IMR-90 (cell line): ENCODE measurements at regions of chr9 and their contacts with region 1.

Region 1: DNA sequence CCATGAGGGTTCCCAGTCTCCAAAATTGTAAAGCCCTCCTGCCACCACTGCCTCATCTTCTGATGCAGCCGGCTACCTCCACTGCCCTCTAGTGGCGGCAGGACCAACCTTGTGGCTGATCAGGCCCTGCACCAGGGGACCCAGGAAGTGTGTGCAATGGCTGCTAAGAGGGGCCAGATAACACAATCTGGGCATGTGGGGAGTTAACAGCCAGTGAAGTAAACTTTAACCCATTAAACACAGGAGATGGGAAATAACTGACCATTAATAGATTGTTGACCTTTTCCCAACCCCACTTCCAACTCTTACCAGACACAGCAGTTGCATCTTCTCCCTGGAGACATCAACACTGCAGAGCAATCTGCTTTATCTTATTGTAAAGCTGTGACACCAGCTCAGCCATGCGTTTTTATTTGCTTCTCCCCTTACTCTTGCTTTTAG is 63.3 kb downstream of the FREM1 start:
- DNase-seq: peak; percentile 17
- ATAC-seq: peak; percentile 63; the same call in 1 of the 2 replicates
- H3K4me3 ChIP-seq: no peak overlapping the region
- H3K27ac ChIP-seq: no peak overlapping the region
- H3K4me1 ChIP-seq: no peaks in the 10 kb centered on the region
- H3K27me3 ChIP-seq: no peaks in the 10 kb centered on the region; the same call in 1 of the 2 replicates
- CTCF ChIP-seq: peak; percentile 46
- POLR2A ChIP-seq: no peak
- RAD21 ChIP-seq: peak; percentile 11; the same call in 1 of the 2 replicates

Region 2: GRCh38 chr9:13750061-13750460 is 1096.8 kb before region 1 on chr9:
- CTCF ChIA-PET with region 1: no interaction called
- POLR2A ChIA-PET with region 1: no interaction called
- dilution Hi-C with region 1: no loop called
- in situ Hi-C with region 1: no loop called
- intact Hi-C with region 1: loop called (anchors 10 kb)
- DNase-seq: peak; percentile 94
- ATAC-seq: peak; percentile 83
- H3K4me3 ChIP-seq: no peak overlapping the region
- H3K27ac ChIP-seq: no peak overlapping the region
- H3K4me1 ChIP-seq: no peaks in the 10 kb centered on the region
- H3K27me3 ChIP-seq: no peaks in the 10 kb centered on the region
- CTCF ChIP-seq: no peak
- POLR2A ChIP-seq: no peak
- RAD21 ChIP-seq: no peak

Region 3: DNA sequence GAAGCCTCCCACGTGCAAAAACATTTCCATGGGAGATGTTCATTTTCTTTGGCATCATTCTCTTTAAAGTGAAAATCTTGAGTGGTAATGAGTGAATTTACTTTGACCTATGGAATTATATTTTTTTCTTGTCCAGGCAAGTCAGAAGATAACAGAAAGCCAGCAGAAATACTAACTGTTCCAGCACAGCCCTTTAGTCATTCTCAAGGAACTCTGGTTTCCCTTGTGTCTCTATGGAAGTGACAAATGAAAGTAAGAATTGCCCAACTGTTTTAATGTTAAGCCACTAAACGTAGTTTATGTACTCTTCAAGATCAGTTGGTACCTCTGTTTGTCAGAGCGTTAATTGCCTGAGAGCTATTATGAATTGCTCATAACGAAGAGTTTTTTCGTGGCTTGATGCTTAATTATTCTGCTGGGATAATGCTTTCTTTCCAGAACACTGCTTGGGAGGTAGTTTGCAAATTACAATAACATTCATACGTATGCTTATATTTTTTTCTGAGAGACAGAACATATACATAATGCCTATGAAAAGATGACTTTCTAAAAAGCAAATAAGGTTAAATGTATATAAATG is 39.9 kb before region 1 on chr9:
- CTCF ChIA-PET with region 1: no interaction called
- POLR2A ChIA-PET with region 1: no interaction called
- dilution Hi-C with region 1: no loop called
- in situ Hi-C with region 1: no loop called
- intact Hi-C with region 1: no loop called
- DNase-seq: no peak
- ATAC-seq: no peak
- H3K4me3 ChIP-seq: no peak overlapping the region
- H3K27ac ChIP-seq: no peak overlapping the region
- H3K4me1 ChIP-seq: no peaks in the 10 kb centered on the region
- H3K27me3 ChIP-seq: no peaks in the 10 kb centered on the region
- CTCF ChIP-seq: no peak
- POLR2A ChIP-seq: no peak
- RAD21 ChIP-seq: no peak